ENCODE measurements at regions of chr22 and their contacts with region 1.

Region 1: GRCh38 chr22:32796865-32797573 is 4.5 kb upstream of the TIMP3 start:
- DNase-seq: peak; percentile 71
- H3K4me3 Mint-ChIP-seq: no peak overlapping the region
- H3K27ac Mint-ChIP-seq: no peak overlapping the region
- H3K4me1 Mint-ChIP-seq: no peaks in the 10 kb centered on the region
- H3K27me3 Mint-ChIP-seq: peaks cover 56% of the 10 kb centered on the region

Region 2: DNA sequence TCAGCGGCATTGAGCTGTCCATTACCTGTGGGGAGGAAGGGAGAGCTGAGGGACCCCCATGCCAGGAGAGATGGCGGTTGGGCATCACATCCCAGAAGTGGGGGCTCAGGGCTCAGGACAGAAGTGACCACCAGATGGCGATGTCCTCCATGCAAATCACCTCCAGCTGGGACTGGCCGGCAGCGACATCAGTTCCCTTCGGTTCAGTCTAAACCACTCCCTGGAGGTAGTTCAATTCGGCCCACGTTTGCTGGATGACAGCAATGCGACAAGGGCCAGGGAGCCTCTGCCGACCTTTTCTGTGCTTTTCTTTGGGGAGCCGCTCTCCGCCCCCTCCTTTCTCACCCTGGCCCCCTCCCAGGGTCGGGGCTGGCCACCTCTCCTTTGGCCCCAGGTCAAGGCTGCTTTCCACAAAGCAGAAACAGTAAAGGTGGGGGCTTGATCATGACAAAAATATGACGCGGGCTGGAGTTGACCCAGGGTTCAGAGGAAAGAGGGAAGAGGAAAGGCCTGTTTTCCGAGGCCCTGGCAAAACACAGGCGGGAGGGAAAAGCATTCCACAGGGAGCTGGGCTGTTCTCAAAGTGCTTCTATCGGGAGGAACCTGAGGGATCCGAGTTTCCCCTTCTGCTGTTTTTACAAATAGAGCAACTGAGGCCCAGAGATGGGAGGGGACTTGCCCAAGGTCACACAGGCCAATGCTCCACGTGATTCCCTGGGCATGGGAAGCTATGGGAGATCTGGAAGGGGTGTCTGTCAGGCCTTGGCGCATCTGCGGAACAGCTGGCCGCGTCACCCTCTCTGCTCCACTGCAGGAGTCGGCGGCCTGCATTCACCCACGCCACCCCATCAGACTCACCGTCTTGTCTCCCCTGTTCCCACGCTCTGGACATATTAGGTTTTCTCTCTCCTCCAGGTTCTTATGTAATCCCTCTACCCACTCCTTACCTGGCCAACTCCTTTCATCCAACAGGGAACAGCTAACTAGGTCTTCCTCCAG is 267.7 kb before region 1 on chr22:
- CTCF ChIA-PET with region 1: interaction called, 60 read pairs
- DNase-seq: peak; percentile 78
- H3K4me3 Mint-ChIP-seq: no peak overlapping the region
- H3K27ac Mint-ChIP-seq: no peak overlapping the region
- H3K4me1 Mint-ChIP-seq: no peaks in the 10 kb centered on the region
- H3K27me3 Mint-ChIP-seq: peaks cover 11% of the 10 kb centered on the region

Region 3: DNA sequence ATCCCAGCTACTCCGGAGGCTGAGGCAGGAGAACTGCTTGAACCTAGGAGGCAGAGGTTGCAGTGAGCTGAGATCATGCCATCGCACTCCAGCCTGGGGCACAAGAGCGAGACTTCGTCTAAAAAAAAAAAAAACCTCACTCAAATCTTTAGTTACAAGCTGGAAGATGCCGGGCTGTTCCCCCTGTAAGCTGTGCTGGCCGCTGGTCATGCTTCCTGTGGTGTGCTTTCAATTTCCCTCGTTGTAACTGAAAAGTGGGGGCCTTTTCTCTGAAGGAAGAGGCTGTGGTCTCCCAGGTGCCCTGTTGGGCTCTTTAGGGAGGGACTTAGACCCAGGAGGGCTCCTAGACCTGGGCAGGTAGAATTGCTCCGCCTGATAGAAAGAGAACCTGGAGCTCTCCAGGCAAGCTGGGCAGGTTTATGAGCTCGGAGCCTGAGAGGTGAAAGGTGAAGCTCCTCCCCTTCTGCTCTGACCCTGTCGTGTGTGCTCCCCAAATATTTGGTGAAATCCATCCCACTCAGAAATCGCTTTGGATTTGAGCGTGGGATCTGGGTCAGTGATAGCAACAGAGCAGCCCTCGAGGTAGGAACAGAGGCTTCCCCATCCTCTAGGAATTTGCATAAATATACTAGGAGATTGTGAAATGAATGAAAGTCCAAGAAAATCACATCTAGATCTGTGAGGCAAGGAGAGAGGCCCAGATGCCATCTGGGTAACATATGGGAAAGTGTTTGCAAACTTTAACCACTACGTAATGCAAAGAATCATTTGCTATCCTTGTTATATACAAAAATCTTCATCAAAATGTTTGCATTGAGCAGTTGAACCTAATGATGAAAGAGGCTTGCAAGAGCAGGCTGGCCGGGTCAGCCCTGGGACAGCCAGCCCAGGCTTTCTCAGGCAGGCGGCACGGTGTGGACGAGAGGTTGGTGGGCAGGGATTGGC is 168.1 kb before region 1 on chr22:
- CTCF ChIA-PET with region 1: interaction called, 20 read pairs
- DNase-seq: no peak
- H3K4me3 Mint-ChIP-seq: no peak overlapping the region
- H3K27ac Mint-ChIP-seq: no peak overlapping the region
- H3K4me1 Mint-ChIP-seq: peaks cover 7% of the 10 kb centered on the region
- H3K27me3 Mint-ChIP-seq: peaks cover 10% of the 10 kb centered on the region

Region 4: DNA sequence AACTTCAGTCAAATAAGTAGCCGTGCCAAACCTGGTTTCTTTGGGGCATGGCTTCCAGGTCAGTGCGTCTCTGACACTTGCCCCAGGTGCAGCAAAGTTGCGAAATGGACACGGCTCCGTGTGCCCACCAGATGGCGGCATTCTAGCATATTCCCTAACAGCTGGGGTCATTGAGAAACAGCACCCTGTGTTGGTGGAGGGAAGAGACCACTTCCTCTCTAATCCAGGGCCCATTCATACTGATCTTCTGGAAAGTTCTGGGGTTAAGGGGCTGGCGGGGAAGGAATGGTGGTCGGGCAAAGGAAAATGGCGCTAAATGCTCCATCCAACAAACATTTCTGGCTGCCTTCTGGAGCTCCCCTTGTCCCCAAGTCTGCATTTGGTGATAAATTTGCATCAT is 136.7 kb before region 1 on chr22:
- CTCF ChIA-PET with region 1: interaction called, 256 read pairs
- DNase-seq: peak; percentile 72
- H3K4me3 Mint-ChIP-seq: no peak overlapping the region
- H3K27ac Mint-ChIP-seq: no peak overlapping the region
- H3K4me1 Mint-ChIP-seq: no peaks in the 10 kb centered on the region
- H3K27me3 Mint-ChIP-seq: peaks cover 27% of the 10 kb centered on the region

Region 5: DNA sequence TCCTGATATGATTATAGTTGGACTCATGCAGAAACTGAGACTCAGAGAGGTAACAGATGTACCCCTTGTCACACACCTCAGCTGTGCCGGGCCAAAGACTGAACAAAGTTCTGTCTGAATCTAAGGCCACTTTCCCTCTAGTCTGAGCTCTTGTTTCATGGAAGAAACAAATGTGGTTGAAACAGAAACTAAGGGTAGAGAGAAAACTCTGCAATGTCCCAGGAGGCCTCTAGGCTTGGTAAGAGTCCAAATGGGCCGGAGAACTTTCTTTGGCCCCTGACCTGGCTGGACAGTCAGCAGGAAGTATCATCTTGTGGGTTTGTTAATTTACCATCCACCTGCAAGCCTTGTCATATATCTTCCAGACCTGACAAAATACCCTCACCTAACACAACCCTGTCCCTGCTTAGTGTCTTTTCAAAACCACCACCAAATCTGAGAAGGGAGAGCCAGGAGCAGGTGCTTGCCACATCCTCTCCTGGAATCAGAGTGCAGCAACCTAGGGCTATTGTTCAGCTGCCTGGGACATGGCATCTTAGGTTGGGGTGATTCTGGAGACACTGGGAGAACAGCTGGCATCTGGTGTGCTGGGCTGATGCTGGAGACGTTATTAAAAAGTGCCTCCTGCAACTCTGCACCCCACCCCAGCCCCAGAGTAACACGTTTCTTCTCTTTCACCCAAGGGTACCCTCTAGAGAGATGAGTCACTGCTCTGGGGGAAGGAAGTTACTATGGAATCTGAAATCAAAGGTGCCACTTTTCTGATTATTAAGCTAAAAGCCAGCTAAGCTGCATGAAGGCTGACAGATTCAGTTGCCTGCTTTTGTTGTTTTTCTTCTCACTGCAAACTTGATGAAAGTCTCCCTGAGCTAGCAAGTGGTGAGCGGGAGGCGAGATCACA is 121.8 kb before region 1 on chr22:
- CTCF ChIA-PET with region 1: interaction called, 18 read pairs
- DNase-seq: no peak
- H3K4me3 Mint-ChIP-seq: no peak overlapping the region
- H3K27ac Mint-ChIP-seq: no peak overlapping the region
- H3K4me1 Mint-ChIP-seq: no peaks in the 10 kb centered on the region
- H3K27me3 Mint-ChIP-seq: peaks cover 4% of the 10 kb centered on the region

Region 6: GRCh38 chr22:32754413-32755041 is 42.5 kb before region 1 on chr22:
- CTCF ChIA-PET with region 1: no interaction called
- DNase-seq: no peak
- H3K4me3 Mint-ChIP-seq: no peak overlapping the region
- H3K27ac Mint-ChIP-seq: no peak overlapping the region
- H3K4me1 Mint-ChIP-seq: peaks cover 7% of the 10 kb centered on the region
- H3K27me3 Mint-ChIP-seq: no peaks in the 10 kb centered on the region

Region 7: DNA sequence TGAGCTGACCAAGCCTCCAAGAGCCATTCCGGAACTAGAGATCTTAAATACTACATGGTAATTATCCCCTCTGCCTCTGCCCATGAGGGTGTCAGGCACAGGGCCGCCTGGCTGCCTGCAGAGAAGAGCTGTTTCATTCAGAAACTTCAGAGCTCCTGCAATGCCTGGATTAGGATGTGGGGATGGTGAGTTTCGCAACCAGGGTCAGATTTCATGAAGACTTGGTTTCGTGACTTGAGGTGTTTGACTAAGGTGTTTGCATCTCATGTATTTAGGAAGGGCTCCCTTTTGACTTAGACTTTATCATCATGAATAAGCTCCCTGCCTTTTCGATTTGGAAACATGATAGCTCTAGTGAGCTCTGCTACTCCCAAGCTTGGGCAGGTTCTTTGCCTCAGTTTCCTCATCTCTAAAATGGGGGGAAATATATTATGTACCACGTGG is 13.6 kb after region 1 on chr22:
- CTCF ChIA-PET with region 1: interaction called, 27 read pairs
- DNase-seq: no peak
- H3K4me3 Mint-ChIP-seq: no peak overlapping the region
- H3K27ac Mint-ChIP-seq: no peak overlapping the region
- H3K4me1 Mint-ChIP-seq: no peaks in the 10 kb centered on the region
- H3K27me3 Mint-ChIP-seq: peaks cover 24% of the 10 kb centered on the region

Region 8: GRCh38 chr22:32897400-32897799 is 100.4 kb after region 1 on chr22:
- CTCF ChIA-PET with region 1: no interaction called
- DNase-seq: no peak
- H3K4me3 Mint-ChIP-seq: no peak overlapping the region
- H3K27ac Mint-ChIP-seq: no peak overlapping the region
- H3K4me1 Mint-ChIP-seq: no peaks in the 10 kb centered on the region
- H3K27me3 Mint-ChIP-seq: no peaks in the 10 kb centered on the region

Measured in activated naive CD4-positive, alpha-beta T cell treated with anti-CD3 and anti-CD28 coated beads, Interleukin-2, amount 10 ng/mL, durations not matched to agents 7 days and 5 days (primary cell).